PC-3 (cell line): ENCODE measurements at regions of chr1 and their contacts with region 1.

Region 1: GRCh38 chr1:33228935-33229487 is 27.3 kb upstream of the ZNF362 start:
- DNase-seq: peak; percentile 34
- ATAC-seq: no peak
- H3K4me3 ChIP-seq: no peak overlapping the region
- H3K27ac ChIP-seq: no peak overlapping the region
- H3K4me1 ChIP-seq: no peaks in the 10 kb centered on the region
- H3K27me3 ChIP-seq: no peaks in the 10 kb centered on the region
- CTCF ChIP-seq: no peak

Region 2: GRCh38 chr1:33188572-33189275 is 40.3 kb before region 1 on chr1:
- CTCF ChIA-PET with region 1: no interaction called
- POLR2A ChIA-PET with region 1: no interaction called
- intact Hi-C with region 1: no loop called
- DNase-seq: no peak
- ATAC-seq: no peak
- H3K4me3 ChIP-seq: no peak overlapping the region
- H3K27ac ChIP-seq: no peak overlapping the region
- H3K4me1 ChIP-seq: no peaks in the 10 kb centered on the region
- H3K27me3 ChIP-seq: peaks cover 19% of the 10 kb centered on the region
- CTCF ChIP-seq: no peak

Region 3: GRCh38 chr1:33286451-33287185 is 57.6 kb after region 1 on chr1:
- CTCF ChIA-PET with region 1: no interaction called
- POLR2A ChIA-PET with region 1: interaction called, 12 read pairs
- intact Hi-C with region 1: no loop called
- DNase-seq: no peak
- ATAC-seq: no peak
- H3K4me3 ChIP-seq: no peak overlapping the region
- H3K27ac ChIP-seq: no peak overlapping the region
- H3K4me1 ChIP-seq: no peaks in the 10 kb centered on the region
- H3K27me3 ChIP-seq: no peaks in the 10 kb centered on the region
- CTCF ChIP-seq: no peak